B cell (primary cell): ENCODE measurements at regions of chr1 and their contacts with region 1.

Region 1: GRCh38 chr1:166479052-166479631 is 312.3 kb upstream of the FAM78B start:
- DNase-seq: peak; percentile 59
- ATAC-seq: peak; percentile 36
- H3K4me3 ChIP-seq: no peak overlapping the region
- H3K4me3 Mint-ChIP-seq: no peak overlapping the region
- H3K27ac ChIP-seq: no peak overlapping the region
- H3K27ac Mint-ChIP-seq: no peak overlapping the region
- H3K4me1 ChIP-seq: peaks cover 0 to 4% of the 10 kb centered on the region in 2 donors
- H3K4me1 Mint-ChIP-seq: peaks cover 3% of the 10 kb centered on the region
- H3K27me3 ChIP-seq: no peaks in the 10 kb centered on the region
- H3K27me3 Mint-ChIP-seq: no peaks in the 10 kb centered on the region
- CTCF ChIP-seq: peak; percentile 89

Region 2: DNA sequence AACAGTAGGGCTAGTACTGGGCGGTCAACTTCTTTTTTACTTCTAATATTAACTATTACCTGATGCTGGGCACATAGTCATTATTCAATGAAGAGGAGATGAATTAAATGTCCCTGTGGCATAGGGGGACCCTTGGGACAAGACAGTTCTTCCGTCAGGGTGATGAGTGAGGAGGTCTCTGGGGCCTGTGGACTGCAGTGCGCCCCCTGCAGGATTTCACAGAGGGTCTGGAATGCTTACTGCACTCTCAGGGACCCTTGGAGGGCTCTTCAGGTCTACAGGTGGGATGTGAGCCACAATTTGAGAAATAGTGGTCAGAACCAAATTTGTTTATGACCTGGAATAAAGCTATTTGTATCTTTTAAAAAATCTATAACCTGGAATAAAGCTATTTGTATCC is 461.7 kb before region 1 on chr1:
- CTCF ChIA-PET with region 1: no interaction called
- POLR2A ChIA-PET with region 1: no interaction called
- intact Hi-C with region 1: no loop called
- DNase-seq: no peak
- ATAC-seq: no peak
- H3K4me3 ChIP-seq: no peak overlapping the region
- H3K4me3 Mint-ChIP-seq: no peak overlapping the region
- H3K27ac ChIP-seq: no peak overlapping the region
- H3K27ac Mint-ChIP-seq: no peak overlapping the region
- H3K4me1 ChIP-seq: no peaks in the 10 kb centered on the region
- H3K4me1 Mint-ChIP-seq: no peaks in the 10 kb centered on the region
- H3K27me3 ChIP-seq: peaks cover 0 to 5% (median 0%) of the 10 kb centered on the region in 4 experiments
- H3K27me3 Mint-ChIP-seq: peaks cover 29% of the 10 kb centered on the region
- CTCF ChIP-seq: no peak

Region 3: GRCh38 chr1:166489670-166490436 is 10.7 kb after region 1 on chr1:
- CTCF ChIA-PET with region 1: interaction called, 77 read pairs
- POLR2A ChIA-PET with region 1: no interaction called
- intact Hi-C with region 1: loop called (anchors 1 kb)
- DNase-seq: peak; percentile 76
- ATAC-seq: peak; percentile 81
- H3K4me3 ChIP-seq: peak overlapping the region; percentile 57 to 96 (median 83)
- H3K4me3 Mint-ChIP-seq: no peak overlapping the region
- H3K27ac ChIP-seq: peak overlapping the region; percentile 90 to 95
- H3K27ac Mint-ChIP-seq: no peak overlapping the region
- H3K4me1 ChIP-seq: peaks cover 14 to 19% of the 10 kb centered on the region in 2 donors
- H3K4me1 Mint-ChIP-seq: peaks cover 5% of the 10 kb centered on the region
- H3K27me3 ChIP-seq: no peaks in the 10 kb centered on the region
- H3K27me3 Mint-ChIP-seq: no peaks in the 10 kb centered on the region
- CTCF ChIP-seq: no peak

Region 4: GRCh38 chr1:166695115-166695514 is 216.0 kb after region 1 on chr1:
- CTCF ChIA-PET with region 1: no interaction called
- POLR2A ChIA-PET with region 1: no interaction called
- intact Hi-C with region 1: no loop called
- DNase-seq: no peak
- ATAC-seq: no peak
- H3K4me3 ChIP-seq: no peak overlapping the region
- H3K4me3 Mint-ChIP-seq: no peak overlapping the region
- H3K27ac ChIP-seq: no peak overlapping the region
- H3K27ac Mint-ChIP-seq: no peak overlapping the region
- H3K4me1 ChIP-seq: no peaks in the 10 kb centered on the region
- H3K4me1 Mint-ChIP-seq: no peaks in the 10 kb centered on the region
- H3K27me3 ChIP-seq: peaks cover 0 to 11% (median under 1%) of the 10 kb centered on the region in 4 experiments
- H3K27me3 Mint-ChIP-seq: peaks cover 15% of the 10 kb centered on the region
- CTCF ChIP-seq: no peak

Region 5: GRCh38 chr1:166838766-166839599 is 359.8 kb after region 1 on chr1 and contains the start of gene POGK:
- CTCF ChIA-PET with region 1: no interaction called
- POLR2A ChIA-PET with region 1: no interaction called
- intact Hi-C with region 1: loop called (anchors 5 kb)
- DNase-seq: peak; percentile 89
- ATAC-seq: peak; percentile 93
- H3K4me3 ChIP-seq: peak within 1 kb of the TSS; percentile 71 to 86 (median 71)
- H3K4me3 Mint-ChIP-seq: peak within 1 kb of the TSS; percentile 97
- H3K27ac ChIP-seq: peak within 1 kb of the TSS; percentile 83 to 89
- H3K27ac Mint-ChIP-seq: peak within 1 kb of the TSS; percentile 99
- H3K4me1 ChIP-seq: peaks cover 21 to 25% of the 10 kb centered on the region in 2 donors
- H3K4me1 Mint-ChIP-seq: peaks cover 31% of the 10 kb centered on the region
- H3K27me3 ChIP-seq: peaks cover 0 to 3% (median 0%) of the 10 kb centered on the region in 4 experiments
- H3K27me3 Mint-ChIP-seq: no peaks in the 10 kb centered on the region
- CTCF ChIP-seq: no peak
- total RNA-seq, gene POGK: 40.8 and 45.0 TPM in 2 replicates